ENCODE measurements at regions of chr11 and their contacts with region 1.

Region 1: GRCh38 chr11:2409611-2410468 is 9.3 kb downstream of the TSSC4 start:
- DNase-seq: no peak
- H3K4me3 ChIP-seq: peak overlapping the region in 1 of 3 donors; percentile 15
- H3K27ac ChIP-seq: peak overlapping the region in 1 of 2 donors; percentile 12
- H3K4me1 ChIP-seq: no peaks in the 10 kb centered on the region
- H3K27me3 ChIP-seq: no peaks in the 10 kb centered on the region
- CTCF ChIP-seq: no peak
- POLR2A ChIP-seq: no peak

Region 2: GRCh38 chr11:2186669-2187279 is 223.1 kb before region 1 on chr11:
- intact Hi-C with region 1: loop called (anchors 5 kb)
- DNase-seq: no peak
- H3K4me3 ChIP-seq: no peak overlapping the region
- H3K27ac ChIP-seq: no peak overlapping the region
- H3K4me1 ChIP-seq: no peaks in the 10 kb centered on the region
- H3K27me3 ChIP-seq: peaks cover 0 to 20% of the 10 kb centered on the region in 2 donors
- CTCF ChIP-seq: peak in 2 of 3 donors; percentile 10 to 45
- POLR2A ChIP-seq: no peak

Region 3: DNA sequence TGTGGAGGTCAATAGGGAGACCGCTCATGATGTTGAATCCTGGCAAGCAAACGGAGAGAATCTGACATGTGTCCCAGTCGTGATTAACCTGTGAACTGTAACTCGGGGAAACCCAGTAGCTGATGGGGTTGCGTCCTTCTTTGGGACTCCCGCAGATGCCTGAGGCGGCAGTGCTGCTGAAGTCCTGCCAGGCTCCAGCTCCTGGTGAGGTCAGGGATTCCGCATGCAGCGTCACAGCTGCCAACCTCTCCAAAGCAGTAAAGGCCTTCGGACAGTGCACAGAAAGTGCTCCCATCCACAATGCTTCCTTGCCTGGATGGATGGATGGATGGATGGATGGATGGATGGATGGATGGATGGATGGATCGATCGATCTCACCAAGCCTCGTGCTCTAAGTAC is 48.5 kb after region 1 on chr11:
- intact Hi-C with region 1: no loop called
- DNase-seq: no peak
- H3K4me3 ChIP-seq: no peak overlapping the region
- H3K27ac ChIP-seq: no peak overlapping the region
- H3K4me1 ChIP-seq: no peaks in the 10 kb centered on the region
- H3K27me3 ChIP-seq: no peaks in the 10 kb centered on the region
- CTCF ChIP-seq: no peak
- POLR2A ChIP-seq: no peak

Region 4: GRCh38 chr11:2468363-2469235 is 58.8 kb after region 1 on chr11:
- intact Hi-C with region 1: loop called (anchors 2 kb)
- DNase-seq: no peak
- H3K4me3 ChIP-seq: no peak overlapping the region
- H3K27ac ChIP-seq: no peak overlapping the region
- H3K4me1 ChIP-seq: no peaks in the 10 kb centered on the region
- H3K27me3 ChIP-seq: no peaks in the 10 kb centered on the region
- CTCF ChIP-seq: no peak
- POLR2A ChIP-seq: no peak